GM12878 (cell line): ENCODE measurements at regions of chr6 and their contacts with region 1.

Region 1: DNA sequence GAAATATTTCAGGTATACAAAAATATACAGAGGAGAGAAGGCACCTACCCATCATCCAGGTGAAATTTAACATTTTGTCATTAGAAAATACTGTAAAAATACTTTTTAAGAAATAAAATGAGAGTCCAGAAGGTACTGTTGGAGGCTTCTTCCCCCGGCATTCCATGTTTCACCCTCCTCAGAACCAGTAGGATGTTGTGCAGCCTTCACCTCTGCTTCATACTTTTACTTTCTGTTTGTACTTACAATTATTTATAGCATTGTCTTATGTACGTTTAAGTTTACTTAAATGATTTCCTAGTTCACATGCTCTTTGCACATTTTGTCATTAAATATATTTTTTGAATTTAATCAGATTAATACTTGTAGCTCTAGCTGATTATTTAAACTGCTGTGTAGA is 30.9 kb downstream of the TMEM200A start:
- DNase-seq: no peak
- ATAC-seq: peak; percentile 64
- H3K4me3 ChIP-seq: no peak overlapping the region
- H3K27ac ChIP-seq: no peak overlapping the region
- H3K4me1 ChIP-seq: no peaks in the 10 kb centered on the region
- H3K27me3 ChIP-seq: no peaks in the 10 kb centered on the region
- CTCF ChIP-seq: no peak
- EP300 ChIP-seq: no peak
- POLR2A ChIP-seq: no peak
- RAD21 ChIP-seq: no peak

Region 2: DNA sequence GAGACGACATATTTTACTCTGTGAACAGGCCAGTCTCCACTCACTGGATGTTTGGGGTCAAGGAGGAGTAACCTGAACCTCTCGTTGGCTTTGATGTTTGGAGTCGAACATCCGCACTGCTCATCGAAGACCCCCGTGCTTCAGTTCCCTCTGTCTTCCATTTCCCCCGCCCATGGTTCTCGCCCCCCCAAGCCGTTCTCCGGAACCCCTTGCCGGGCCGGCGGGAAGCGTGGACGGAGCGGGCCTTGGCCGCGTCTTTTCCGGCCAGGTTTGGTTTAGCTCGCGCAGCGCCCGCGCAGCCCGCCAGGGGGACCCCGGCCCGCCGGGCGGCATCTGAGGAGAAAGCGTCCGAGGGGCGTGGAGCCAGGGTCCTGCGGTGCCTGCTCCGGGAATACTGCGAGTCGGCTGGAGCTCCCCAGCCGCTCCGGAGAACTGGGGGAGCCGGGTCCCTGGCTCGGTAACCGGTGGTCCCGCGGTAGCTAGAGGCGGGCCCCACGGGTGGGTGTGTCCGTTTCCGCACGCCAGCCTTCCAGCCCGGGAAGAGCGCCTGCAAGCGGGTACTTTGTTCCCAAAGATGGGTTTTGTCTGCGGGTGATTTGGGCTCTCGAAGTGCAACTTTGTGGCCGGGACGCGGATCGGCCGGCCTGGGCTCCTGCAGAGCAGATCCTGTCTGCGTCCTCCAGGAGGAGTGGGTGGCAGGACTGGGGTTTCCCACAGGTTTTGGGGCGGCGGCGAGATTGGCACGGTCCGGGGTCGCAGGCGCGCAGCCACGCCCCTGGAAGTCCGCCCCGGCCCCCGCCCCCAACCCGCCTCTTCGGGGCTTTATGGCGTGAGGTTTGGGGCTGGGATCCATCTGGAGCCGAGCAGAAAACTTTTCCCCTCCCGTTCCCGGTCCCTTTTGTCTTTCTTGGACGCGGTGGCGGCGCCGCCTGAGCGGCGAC is 31.3 kb before region 1 on chr6 and contains the start of gene TMEM200A:
- CTCF ChIA-PET with region 1: interaction called, 4 read pairs
- POLR2A ChIA-PET with region 1: no interaction called
- RAD21 ChIA-PET with region 1: interaction called, 5 read pairs
- SMC1A ChIA-PET with region 1: interaction called, 18 read pairs
- in situ Hi-C with region 1: no loop called
- intact Hi-C with region 1: no loop called
- DNase-seq: no peak
- ATAC-seq: peak; percentile 80
- H3K4me3 ChIP-seq: peak within 1 kb of the TSS; percentile 50; the same call in 1 of the 2 replicates
- H3K27ac ChIP-seq: no peak within 1 kb of the TSS
- H3K4me1 ChIP-seq: no peaks in the 10 kb centered on the region
- H3K27me3 ChIP-seq: peaks cover 0 to 7% of the 10 kb centered on the region in 2 experiments; a peak in 1 of 4 replicates
- CTCF ChIP-seq: peak; percentile 48 to 69 (median 67); a peak in 5 of 6 replicates
- EP300 ChIP-seq: no peak
- POLR2A ChIP-seq: no peak
- RAD21 ChIP-seq: peak; percentile 56
- polyA plus RNA-seq, gene TMEM200A: 6.0 to 10.0 TPM

Region 3: GRCh38 chr6:130381459-130382380 is 15.0 kb before region 1 on chr6:
- CTCF ChIA-PET with region 1: interaction called, 30 read pairs
- POLR2A ChIA-PET with region 1: interaction called, 14 read pairs
- RAD21 ChIA-PET with region 1: interaction called, 10 read pairs
- SMC1A ChIA-PET with region 1: interaction called, 36 read pairs
- in situ Hi-C with region 1: no loop called
- intact Hi-C with region 1: no loop called
- DNase-seq: no peak
- ATAC-seq: peak; percentile 84
- H3K4me3 ChIP-seq: no peak overlapping the region
- H3K27ac ChIP-seq: no peak overlapping the region
- H3K4me1 ChIP-seq: no peaks in the 10 kb centered on the region
- H3K27me3 ChIP-seq: no peaks in the 10 kb centered on the region
- CTCF ChIP-seq: peak; percentile 12 to 32 (median 12); a peak in 3 of 6 replicates
- EP300 ChIP-seq: no peak
- POLR2A ChIP-seq: no peak
- RAD21 ChIP-seq: peak; percentile 30; the same call in 1 of the 2 replicates

Region 4: DNA sequence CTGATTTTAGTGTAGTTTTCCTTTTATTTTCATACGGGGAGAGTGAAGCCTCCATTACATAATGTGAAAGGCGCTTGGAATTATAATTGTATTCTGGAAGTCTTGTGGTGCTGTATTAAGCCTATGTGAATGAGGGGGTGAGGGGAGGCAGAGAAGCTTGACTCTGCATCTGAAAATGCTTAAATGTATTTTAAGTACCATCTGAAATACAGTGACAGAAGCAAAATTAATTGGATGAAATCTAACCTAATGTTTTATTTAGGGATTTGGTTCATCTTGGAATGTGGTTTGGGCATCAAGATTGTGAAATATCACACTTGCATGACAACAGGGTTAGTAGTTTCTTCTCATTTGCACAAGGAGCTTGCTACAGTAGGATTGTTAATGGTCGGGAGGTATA is 10.3 kb after region 1 on chr6:
- CTCF ChIA-PET with region 1: interaction called, 4 read pairs
- POLR2A ChIA-PET with region 1: interaction called, 4 read pairs
- RAD21 ChIA-PET with region 1: interaction called, 3 read pairs
- SMC1A ChIA-PET with region 1: interaction called, 12 read pairs
- in situ Hi-C with region 1: no loop called
- intact Hi-C with region 1: no loop called
- DNase-seq: no peak
- ATAC-seq: no peak
- H3K4me3 ChIP-seq: no peak overlapping the region
- H3K27ac ChIP-seq: no peak overlapping the region
- H3K4me1 ChIP-seq: no peaks in the 10 kb centered on the region
- H3K27me3 ChIP-seq: no peaks in the 10 kb centered on the region
- CTCF ChIP-seq: no peak
- EP300 ChIP-seq: no peak
- POLR2A ChIP-seq: no peak
- RAD21 ChIP-seq: no peak